ENCODE measurements at regions of chr3 and their contacts with region 1.

Region 1: DNA sequence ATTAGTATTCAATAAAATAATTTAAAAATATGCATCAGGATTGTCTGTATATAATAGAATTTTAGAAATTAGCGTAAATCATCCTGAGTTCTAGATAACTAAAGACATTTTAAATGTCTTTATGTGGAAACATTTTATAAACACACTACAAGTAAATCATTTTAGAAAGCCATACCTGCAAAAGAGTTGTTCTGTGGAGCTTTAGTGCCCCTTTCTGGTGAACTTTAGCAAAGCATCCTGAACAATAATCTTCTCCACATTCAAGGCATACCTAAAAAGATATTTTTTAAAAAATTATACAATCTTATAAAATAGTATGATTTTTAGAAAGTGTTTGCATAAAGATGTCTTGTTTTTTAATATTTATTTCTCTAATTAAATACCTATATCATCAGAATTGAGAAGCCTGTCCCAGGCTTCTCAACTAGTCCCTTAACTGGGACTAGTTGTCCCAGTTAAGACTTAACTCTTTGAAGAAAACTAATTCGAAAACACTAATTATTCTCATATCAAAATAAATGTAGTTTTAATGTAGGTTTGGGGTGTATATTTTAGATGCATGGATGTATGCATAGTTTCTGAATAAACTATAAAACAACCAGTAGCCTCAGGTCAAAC is 29.7 kb downstream of the ZBBX start:
- DNase-seq: no peak
- ATAC-seq: no peak

Region 2: GRCh38 chr3:166013073-166013679 is 1337.2 kb before region 1 on chr3:
- intact Hi-C with region 1: loop called (anchors 10 kb)
- DNase-seq: no peak
- ATAC-seq: no peak

Region 3: GRCh38 chr3:167172377-167172776 is 178.0 kb before region 1 on chr3:
- intact Hi-C with region 1: loop called (anchors 5 kb)
- DNase-seq: no peak
- ATAC-seq: no peak